ENCODE measurements at regions of chr15 and their contacts with region 1.

Region 1: DNA sequence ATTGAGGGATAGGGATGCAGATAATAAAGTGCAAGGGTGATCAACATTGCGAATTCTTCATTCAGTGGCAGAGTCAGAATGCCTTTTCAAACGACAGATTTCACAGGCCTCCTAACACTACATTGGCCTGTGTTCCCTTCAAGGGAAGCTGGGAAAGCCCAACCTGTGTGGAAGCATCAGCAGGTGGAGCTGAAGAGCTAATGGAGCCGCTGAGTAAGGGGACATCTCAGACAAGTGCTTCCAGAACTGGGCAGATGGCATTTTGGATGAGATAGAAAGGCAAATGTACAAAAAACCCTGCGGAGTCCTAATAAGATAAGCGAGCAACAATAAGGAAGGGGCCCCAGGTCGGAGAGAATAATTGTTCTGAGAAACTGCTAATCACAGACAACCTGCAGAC is 8.5 kb upstream of the SLC24A5 start:
- DNase-seq: peak; percentile 61
- H3K4me3 ChIP-seq: no peak overlapping the region
- H3K27ac ChIP-seq: no peak overlapping the region
- H3K4me1 ChIP-seq: no peaks in the 10 kb centered on the region
- H3K27me3 ChIP-seq: peaks cover 1% of the 10 kb centered on the region
- CTCF ChIP-seq: peak; percentile 68

Region 2: GRCh38 chr15:48250640-48251076 is 138.4 kb after region 1 on chr15:
- CTCF ChIA-PET with region 1: no interaction called
- POLR2A ChIA-PET with region 1: no interaction called
- intact Hi-C with region 1: loop called (anchors 1 kb)
- DNase-seq: peak; percentile 87
- H3K4me3 ChIP-seq: no peak overlapping the region
- H3K27ac ChIP-seq: no peak overlapping the region
- H3K4me1 ChIP-seq: no peaks in the 10 kb centered on the region
- H3K27me3 ChIP-seq: no peaks in the 10 kb centered on the region
- CTCF ChIP-seq: peak; percentile 76

Region 3: DNA sequence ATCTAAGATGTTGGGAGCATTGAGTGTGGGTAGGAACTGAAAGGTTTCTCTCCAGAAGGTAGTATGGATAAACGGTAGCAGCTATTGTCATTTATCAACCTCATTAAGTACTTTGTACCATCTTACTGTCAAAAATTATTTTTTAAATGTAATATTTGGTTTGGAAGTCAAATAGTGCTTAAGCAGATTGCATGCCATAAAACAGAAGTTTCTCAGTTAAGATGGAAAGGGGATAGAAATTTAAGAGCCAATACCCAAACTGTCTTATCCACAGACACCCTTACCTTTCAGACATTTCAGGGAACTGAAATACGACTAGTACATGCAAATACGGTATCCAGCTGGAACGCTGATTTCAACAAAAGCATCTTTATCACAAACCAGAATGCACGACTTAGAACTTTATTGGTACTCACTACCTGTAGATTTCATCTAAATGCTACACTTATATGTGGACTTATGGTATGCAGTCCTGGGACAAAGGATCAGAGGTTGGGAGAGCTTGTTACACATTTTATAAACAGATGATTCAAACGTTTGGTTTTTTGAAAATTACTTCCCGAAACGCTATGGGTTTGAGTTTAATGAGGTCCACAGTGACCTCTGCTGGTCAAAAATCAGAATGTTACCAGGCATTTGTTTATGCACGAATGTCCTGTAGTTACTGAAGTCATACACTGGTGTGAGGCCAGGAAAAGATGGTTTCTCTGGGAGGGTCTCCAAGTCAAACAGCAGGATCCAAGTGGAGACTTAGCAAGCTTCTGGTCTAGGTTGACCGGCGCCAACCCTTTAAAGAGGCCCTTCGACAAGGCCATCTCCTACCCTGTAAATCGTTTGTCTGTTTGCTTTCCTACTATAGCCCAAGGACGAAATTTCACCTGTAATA is 173.3 kb after region 1 on chr15:
- CTCF ChIA-PET with region 1: interaction called, 7 read pairs
- POLR2A ChIA-PET with region 1: no interaction called
- intact Hi-C with region 1: loop called (anchors 2 kb)
- DNase-seq: peak; percentile 81
- H3K4me3 ChIP-seq: no peak overlapping the region
- H3K27ac ChIP-seq: no peak overlapping the region
- H3K4me1 ChIP-seq: peaks cover 20% of the 10 kb centered on the region
- H3K27me3 ChIP-seq: no peaks in the 10 kb centered on the region
- CTCF ChIP-seq: peak; percentile 78

Region 4: DNA sequence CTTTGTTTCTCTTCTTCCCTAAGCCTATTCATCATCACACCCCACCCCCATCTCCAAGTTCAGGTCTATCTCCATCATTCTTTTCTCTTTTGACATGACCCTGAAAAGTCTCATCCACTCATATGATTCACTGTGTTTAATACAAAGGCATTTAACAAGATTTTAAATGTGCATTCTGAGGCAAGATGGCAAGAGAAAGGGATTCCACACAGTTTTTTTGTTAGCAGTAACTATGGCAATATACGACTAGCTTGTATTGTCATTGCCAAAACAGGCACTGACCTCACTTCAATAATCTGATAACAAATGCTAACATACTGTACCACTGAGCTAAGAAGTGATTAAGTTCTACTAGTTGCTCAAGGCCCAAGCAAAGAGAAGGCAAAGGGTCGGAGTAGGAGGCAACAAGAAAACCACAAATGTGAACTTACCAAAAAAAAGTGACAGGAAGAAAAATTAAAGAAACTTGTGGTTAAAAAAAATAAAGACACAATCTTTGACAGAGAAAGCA is 480.0 kb after region 1 on chr15:
- CTCF ChIA-PET with region 1: no interaction called
- POLR2A ChIA-PET with region 1: no interaction called
- intact Hi-C with region 1: no loop called
- DNase-seq: peak; percentile 28
- H3K4me3 ChIP-seq: no peak overlapping the region
- H3K27ac ChIP-seq: no peak overlapping the region
- H3K4me1 ChIP-seq: peaks cover under 1% of the 10 kb centered on the region
- H3K27me3 ChIP-seq: no peaks in the 10 kb centered on the region
- CTCF ChIP-seq: no peak